Prostate gland (tissue), 2 donors: ENCODE measurements at regions of chr14 and their contacts with region 1.

Region 1: GRCh38 chr14:105090493-105091053 is 25.3 kb upstream of the GPR132 start:
- DNase-seq: peak; percentile 75
- H3K4me3 ChIP-seq: no peak overlapping the region
- H3K27ac ChIP-seq: peak overlapping the region; percentile 83 to 93
- H3K4me1 ChIP-seq: peaks cover 35% of the 10 kb centered on the region
- H3K27me3 ChIP-seq: no peaks in the 10 kb centered on the region
- CTCF ChIP-seq: peak; percentile 91 to 95 (median 94)
- POLR2A ChIP-seq: no peak

Region 2: GRCh38 chr14:105203057-105203531 is 112.5 kb after region 1 on chr14:
- intact Hi-C with region 1: loop called (anchors 10 kb)
- DNase-seq: peak; percentile 76
- H3K4me3 ChIP-seq: no peak overlapping the region
- H3K27ac ChIP-seq: no peak overlapping the region
- H3K4me1 ChIP-seq: no peaks in the 10 kb centered on the region
- H3K27me3 ChIP-seq: peaks cover 4% of the 10 kb centered on the region
- CTCF ChIP-seq: peak; percentile 90 to 94 (median 93)
- POLR2A ChIP-seq: no peak

Region 3: DNA sequence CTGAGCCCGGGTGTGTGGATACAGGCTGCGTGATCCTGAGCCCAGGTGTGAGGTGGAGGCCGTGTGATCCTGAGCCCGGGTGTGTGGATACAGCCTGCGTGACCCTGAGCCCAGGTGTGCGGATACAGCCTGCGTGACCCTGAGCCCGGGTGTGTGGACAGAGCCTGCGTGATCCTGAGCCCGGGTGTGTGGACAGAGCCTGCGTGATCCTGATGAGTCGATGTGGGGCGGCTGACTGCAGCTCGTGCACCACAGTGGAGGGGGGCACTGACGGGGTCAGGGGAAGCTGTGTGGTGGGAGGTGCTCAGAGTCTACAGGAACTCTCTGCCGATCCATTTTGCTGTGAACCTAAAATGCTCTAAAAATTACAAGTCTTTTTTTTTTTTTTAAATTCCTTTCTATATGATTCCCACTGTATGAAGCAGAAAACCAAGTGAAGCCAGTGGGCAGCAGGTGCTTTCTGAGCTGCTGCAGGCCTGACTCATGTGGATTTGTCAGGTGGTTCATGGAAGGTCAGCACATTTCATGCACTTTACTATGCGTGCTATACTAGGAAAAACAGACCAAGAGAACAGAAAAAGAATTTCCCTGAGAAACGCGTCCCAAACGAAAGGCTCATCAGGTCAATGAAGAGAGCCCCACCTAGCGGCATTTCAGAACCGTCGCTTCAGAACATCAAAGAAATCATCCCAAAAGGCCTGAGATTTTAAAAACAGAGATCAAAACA is 191.0 kb after region 1 on chr14:
- intact Hi-C with region 1: loop called (anchors 10 kb)
- DNase-seq: no peak
- H3K4me3 ChIP-seq: no peak overlapping the region
- H3K27ac ChIP-seq: no peak overlapping the region
- H3K4me1 ChIP-seq: no peaks in the 10 kb centered on the region
- H3K27me3 ChIP-seq: no peaks in the 10 kb centered on the region
- CTCF ChIP-seq: peak; percentile 20 to 66 (median 51)
- POLR2A ChIP-seq: no peak

Region 4: DNA sequence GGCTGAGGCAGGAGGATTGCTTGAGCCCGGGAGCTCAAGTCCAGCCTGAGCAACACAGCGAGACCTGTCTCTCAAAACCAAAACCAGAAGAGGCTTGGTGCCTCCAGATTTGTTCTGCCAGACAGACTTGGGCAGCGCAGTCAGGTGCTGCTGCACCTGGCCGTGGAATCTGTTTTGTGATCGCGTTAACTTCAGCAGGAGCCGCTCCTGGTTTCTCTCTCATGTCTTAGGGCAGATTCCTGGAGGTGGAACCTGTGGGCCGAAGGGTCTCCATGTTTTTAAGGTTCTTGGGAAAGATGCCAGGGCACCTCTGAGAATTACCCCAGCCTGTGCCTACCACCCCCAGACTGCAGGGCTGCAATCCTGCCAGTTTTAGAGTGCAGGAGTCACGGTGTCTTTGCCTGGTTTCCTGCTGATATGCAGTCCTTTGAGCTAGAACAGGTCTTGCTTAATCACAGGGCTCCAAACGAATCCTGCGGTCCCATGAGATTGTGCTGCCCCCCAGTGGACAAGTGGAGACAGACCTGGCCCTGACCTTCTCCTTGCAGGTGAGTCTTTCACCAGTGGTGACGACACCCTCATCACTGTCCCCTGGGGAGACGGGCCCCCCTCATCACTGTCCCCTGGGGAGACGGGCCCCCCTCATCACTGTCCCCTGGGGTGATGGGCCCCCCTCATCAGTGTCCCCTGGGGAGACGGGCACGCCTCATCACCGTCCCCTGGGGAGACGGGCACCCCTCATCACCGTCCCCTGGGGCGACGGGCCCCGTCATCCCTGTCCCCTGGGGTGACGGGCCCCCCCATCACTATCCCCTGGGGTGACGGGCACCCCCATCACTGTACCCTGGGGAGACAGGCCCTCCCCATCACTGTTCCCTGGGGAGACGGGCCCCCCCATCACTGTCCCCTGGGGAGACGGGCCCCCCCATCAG is 261.6 kb after region 1 on chr14:
- intact Hi-C with region 1: loop called (anchors 5 kb)
- DNase-seq: peak; percentile 87
- H3K4me3 ChIP-seq: no peak overlapping the region
- H3K27ac ChIP-seq: no peak overlapping the region
- H3K4me1 ChIP-seq: no peaks in the 10 kb centered on the region
- H3K27me3 ChIP-seq: no peaks in the 10 kb centered on the region
- CTCF ChIP-seq: peak; percentile 59 to 90 (median 88)
- POLR2A ChIP-seq: no peak